Caco-2 (cell line): ENCODE measurements at regions of chr2 and their contacts with region 1.

Region 1: GRCh38 chr2:223909001-223909741 is 36.0 kb downstream of the WDFY1 start:
- DNase-seq: peak in 1 of 2 experiments; percentile 48
- H3K4me3 ChIP-seq: no peak overlapping the region
- H3K4me3 Mint-ChIP-seq: peak overlapping the region; percentile 57
- H3K27ac Mint-ChIP-seq: peak overlapping the region; percentile 80
- H3K4me1 ChIP-seq: peaks cover 41% of the 10 kb centered on the region
- H3K4me1 Mint-ChIP-seq: peaks cover 37% of the 10 kb centered on the region
- H3K27me3 ChIP-seq: no peaks in the 10 kb centered on the region
- H3K27me3 Mint-ChIP-seq: no peaks in the 10 kb centered on the region
- CTCF ChIP-seq: no peak

Region 2: DNA sequence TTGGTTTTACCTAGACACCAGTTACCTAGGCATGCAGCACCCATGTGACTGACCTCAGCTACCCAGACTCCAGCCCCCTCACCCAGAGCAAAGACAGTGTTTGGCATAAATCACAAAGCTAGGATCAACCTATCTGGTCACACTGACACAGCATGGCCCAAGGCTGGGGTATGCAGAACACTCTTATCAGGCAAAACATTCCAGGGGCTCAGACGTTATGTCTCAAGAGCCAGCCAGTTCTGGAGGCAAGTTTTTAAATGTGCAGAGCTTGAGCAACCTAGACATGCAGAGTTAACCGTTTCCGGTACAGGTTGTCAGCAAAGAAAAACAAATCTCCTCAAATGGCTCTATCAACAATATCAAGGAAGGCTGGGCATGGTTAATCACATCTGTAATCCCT is 164.6 kb before region 1 on chr2:
- CTCF ChIA-PET with region 1: no interaction called
- POLR2A ChIA-PET with region 1: no interaction called
- intact Hi-C with region 1: loop called (anchors 1 kb)
- DNase-seq: peak; percentile 89 to 90
- H3K4me3 ChIP-seq: no peak overlapping the region
- H3K4me3 Mint-ChIP-seq: peak overlapping the region; percentile 52
- H3K27ac Mint-ChIP-seq: peak overlapping the region; percentile 85
- H3K4me1 ChIP-seq: peaks cover 34% of the 10 kb centered on the region
- H3K4me1 Mint-ChIP-seq: peaks cover 37% of the 10 kb centered on the region
- H3K27me3 ChIP-seq: no peaks in the 10 kb centered on the region
- H3K27me3 Mint-ChIP-seq: no peaks in the 10 kb centered on the region
- CTCF ChIP-seq: no peak

Region 3: DNA sequence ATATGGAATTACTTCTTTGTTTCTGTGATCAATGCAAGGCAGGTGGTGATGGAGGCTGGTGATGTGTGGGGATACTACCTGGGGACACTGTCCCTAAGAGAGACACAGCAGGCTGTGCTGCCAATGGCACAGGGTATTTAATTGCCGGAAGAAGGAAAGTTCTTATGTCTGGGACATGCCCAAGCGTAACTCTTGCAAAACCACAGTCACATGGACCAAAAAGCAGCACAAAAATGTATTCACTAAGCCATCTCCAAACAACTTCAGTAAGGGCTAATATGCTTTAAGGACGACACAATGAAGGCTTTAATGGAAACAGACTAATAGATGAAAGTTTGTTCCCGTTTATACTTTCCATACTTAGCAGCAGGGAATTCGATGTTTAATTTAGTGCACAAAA is 22.0 kb before region 1 on chr2:
- CTCF ChIA-PET with region 1: interaction called, 5 read pairs
- POLR2A ChIA-PET with region 1: interaction called, 3 read pairs
- intact Hi-C with region 1: loop called (anchors 1 kb)
- DNase-seq: peak in 1 of 2 experiments; percentile 65
- H3K4me3 ChIP-seq: no peak overlapping the region
- H3K4me3 Mint-ChIP-seq: no peak overlapping the region
- H3K27ac Mint-ChIP-seq: peak overlapping the region; percentile 12
- H3K4me1 ChIP-seq: 0 out of 2 replicates have a peak, but pooled peaks cover 6% of the 10 kb centered on the region
- H3K4me1 Mint-ChIP-seq: peaks cover 8% of the 10 kb centered on the region
- H3K27me3 ChIP-seq: no peaks in the 10 kb centered on the region
- H3K27me3 Mint-ChIP-seq: no peaks in the 10 kb centered on the region
- CTCF ChIP-seq: no peak

Region 4: GRCh38 chr2:223944703-223945531 is 35.7 kb after region 1 on chr2 and contains the start of gene WDFY1:
- CTCF ChIA-PET with region 1: no interaction called
- POLR2A ChIA-PET with region 1: no interaction called
- intact Hi-C with region 1: loop called (anchors 1 kb)
- DNase-seq: peak; percentile 90 to 96
- H3K4me3 ChIP-seq: peak within 1 kb of the TSS; percentile 96
- H3K4me3 Mint-ChIP-seq: peak within 1 kb of the TSS; percentile 97
- H3K27ac Mint-ChIP-seq: peak within 1 kb of the TSS; percentile 94
- H3K4me1 ChIP-seq: peaks cover 18% of the 10 kb centered on the region
- H3K4me1 Mint-ChIP-seq: peaks cover 39% of the 10 kb centered on the region
- H3K27me3 ChIP-seq: no peaks in the 10 kb centered on the region
- H3K27me3 Mint-ChIP-seq: no peaks in the 10 kb centered on the region
- CTCF ChIP-seq: no peak
- total RNA-seq, gene WDFY1: 110 and 123 TPM in 2 replicates

Region 5: DNA sequence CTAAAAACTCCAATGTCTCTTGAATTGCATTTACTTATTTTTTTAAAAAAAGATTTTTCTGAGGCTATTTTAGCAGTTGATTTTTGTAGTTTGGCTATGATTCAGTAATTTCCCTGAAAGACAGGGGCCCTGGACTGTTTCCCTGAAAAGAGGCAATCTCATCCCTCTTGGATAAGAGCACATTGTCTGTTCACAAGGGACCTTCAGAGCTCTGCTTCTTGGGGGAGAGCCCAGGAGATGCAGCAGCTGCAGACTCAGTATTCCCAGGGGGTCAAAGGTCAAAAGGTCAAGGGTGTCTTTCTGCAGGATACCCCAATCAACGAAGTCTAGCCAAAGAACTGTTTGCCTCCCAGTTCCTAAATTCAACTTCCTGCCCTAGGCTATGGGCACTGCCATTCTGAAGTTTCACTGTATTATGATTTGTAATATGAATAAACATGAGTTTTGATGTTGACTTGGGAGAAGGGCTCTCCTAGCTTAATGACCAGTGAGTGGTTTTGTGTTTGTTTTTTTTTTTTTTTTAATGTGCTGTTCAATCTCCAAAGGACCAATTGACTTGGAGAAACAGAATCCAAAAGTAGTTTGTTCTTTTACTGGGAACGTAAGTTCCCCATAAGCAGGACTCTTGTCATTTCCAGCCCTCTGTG is 286.9 kb after region 1 on chr2:
- CTCF ChIA-PET with region 1: no interaction called
- POLR2A ChIA-PET with region 1: no interaction called
- intact Hi-C with region 1: no loop called
- DNase-seq: no peak
- H3K4me3 ChIP-seq: no peak overlapping the region
- H3K4me3 Mint-ChIP-seq: no peak overlapping the region
- H3K27ac Mint-ChIP-seq: no peak overlapping the region
- H3K4me1 ChIP-seq: no peaks in the 10 kb centered on the region
- H3K4me1 Mint-ChIP-seq: no peaks in the 10 kb centered on the region
- H3K27me3 ChIP-seq: no peaks in the 10 kb centered on the region
- H3K27me3 Mint-ChIP-seq: no peaks in the 10 kb centered on the region
- CTCF ChIP-seq: no peak